Transverse colon (tissue), 4 donors: ENCODE measurements at regions of chr7 and their contacts with region 1.

Region 1: GRCh38 chr7:98841179-98841997 is 28.4 kb downstream of the TMEM130 start:
- DNase-seq: peak; percentile 56
- H3K4me3 ChIP-seq: no peak overlapping the region
- H3K27ac ChIP-seq: no peak overlapping the region
- H3K4me1 ChIP-seq: no peaks in the 10 kb centered on the region
- H3K27me3 ChIP-seq: peaks cover 8% of the 10 kb centered on the region
- CTCF ChIP-seq: peak; percentile 89 to 96 (median 96)
- EP300 ChIP-seq: no peak
- POLR2A ChIP-seq: no peak

Region 2: DNA sequence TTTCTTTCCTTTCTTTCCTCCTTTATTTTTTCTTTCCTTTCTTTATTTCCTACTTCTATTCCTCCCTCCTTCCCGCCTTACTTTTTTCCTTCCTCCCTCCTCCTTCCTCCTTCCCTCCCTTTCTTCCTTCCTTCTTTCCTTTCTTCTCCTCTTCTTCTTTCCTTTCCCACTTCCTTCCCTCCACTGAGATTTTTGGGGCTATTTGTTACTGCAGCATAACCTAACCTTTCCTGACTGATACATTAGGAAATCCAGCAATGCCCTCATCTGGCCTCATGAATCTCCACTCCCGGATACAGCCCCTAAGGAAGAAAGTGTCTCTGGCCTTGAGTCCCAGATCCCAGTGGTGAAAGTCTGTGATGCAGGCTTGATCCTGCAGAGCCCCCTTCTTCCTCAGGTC is 401.9 kb before region 1 on chr7:
- in situ Hi-C with region 1: loop called in 2 of 4 experiments (anchors 5 kb)
- intact Hi-C with region 1: no loop called
- DNase-seq: no peak
- H3K4me3 ChIP-seq: no peak overlapping the region
- H3K27ac ChIP-seq: no peak overlapping the region
- H3K4me1 ChIP-seq: no peaks in the 10 kb centered on the region
- H3K27me3 ChIP-seq: no peaks in the 10 kb centered on the region
- CTCF ChIP-seq: no peak
- EP300 ChIP-seq: no peak
- POLR2A ChIP-seq: no peak